ENCODE measurements at regions of chr4 and their contacts with region 1.

Region 1: DNA sequence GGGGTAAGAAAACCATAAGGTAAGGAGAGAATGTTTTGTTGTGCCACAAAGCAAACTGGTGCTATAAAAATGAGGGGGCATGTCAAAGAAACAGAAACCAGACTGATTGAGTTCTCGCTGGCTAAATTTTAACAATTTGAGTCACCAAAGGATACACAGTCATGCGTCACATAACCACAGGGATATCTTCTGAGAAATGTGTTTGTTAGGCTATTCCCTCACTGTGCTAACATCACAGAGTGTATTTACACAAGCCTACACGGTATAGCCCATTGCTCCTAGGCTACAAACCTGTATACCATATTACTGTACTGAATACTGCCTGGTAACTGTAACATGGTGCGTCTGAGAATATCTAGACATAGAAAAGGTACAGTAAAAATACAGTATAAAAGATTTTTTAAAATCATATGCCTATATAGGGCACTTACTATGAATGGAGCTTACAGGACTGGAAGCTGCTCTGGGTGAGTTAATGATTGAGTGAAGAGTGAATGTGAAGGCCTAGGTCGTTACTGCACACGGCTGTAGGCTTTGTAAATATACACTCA is 50.1 kb downstream of the FBXW7 start:
- DNase-seq: peak; percentile 60
- H3K4me3 Mint-ChIP-seq: peak overlapping the region; percentile 40
- H3K27ac Mint-ChIP-seq: peak overlapping the region; percentile 77
- H3K4me1 Mint-ChIP-seq: peaks cover 48% of the 10 kb centered on the region
- H3K27me3 Mint-ChIP-seq: no peaks in the 10 kb centered on the region

Region 2: GRCh38 chr4:151940926-151941617 is 544.7 kb before region 1 on chr4:
- intact Hi-C with region 1: no loop called
- DNase-seq: no peak
- H3K4me3 Mint-ChIP-seq: no peak overlapping the region
- H3K27ac Mint-ChIP-seq: peak overlapping the region; percentile 54
- H3K4me1 Mint-ChIP-seq: peaks cover 10% of the 10 kb centered on the region
- H3K27me3 Mint-ChIP-seq: peaks cover 3% of the 10 kb centered on the region

Region 3: GRCh38 chr4:152255437-152256011 is 230.3 kb before region 1 on chr4:
- intact Hi-C with region 1: loop called (anchors 1 kb)
- DNase-seq: peak; percentile 70
- H3K4me3 Mint-ChIP-seq: no peak overlapping the region
- H3K27ac Mint-ChIP-seq: no peak overlapping the region
- H3K4me1 Mint-ChIP-seq: no peaks in the 10 kb centered on the region
- H3K27me3 Mint-ChIP-seq: no peaks in the 10 kb centered on the region

Region 4: GRCh38 chr4:152460488-152460887 is 25.3 kb before region 1 on chr4:
- intact Hi-C with region 1: loop called (anchors 1 kb)
- DNase-seq: no peak
- H3K4me3 Mint-ChIP-seq: no peak overlapping the region
- H3K27ac Mint-ChIP-seq: peak overlapping the region; percentile 59
- H3K4me1 Mint-ChIP-seq: peaks cover 79% of the 10 kb centered on the region
- H3K27me3 Mint-ChIP-seq: no peaks in the 10 kb centered on the region

Region 5: GRCh38 chr4:152556283-152556682 is 70.5 kb after region 1 on chr4:
- intact Hi-C with region 1: loop called (anchors 1 kb)
- DNase-seq: no peak
- H3K4me3 Mint-ChIP-seq: peak overlapping the region; percentile 41
- H3K27ac Mint-ChIP-seq: peak overlapping the region; percentile 77
- H3K4me1 Mint-ChIP-seq: peaks cover 43% of the 10 kb centered on the region
- H3K27me3 Mint-ChIP-seq: no peaks in the 10 kb centered on the region

Region 6: DNA sequence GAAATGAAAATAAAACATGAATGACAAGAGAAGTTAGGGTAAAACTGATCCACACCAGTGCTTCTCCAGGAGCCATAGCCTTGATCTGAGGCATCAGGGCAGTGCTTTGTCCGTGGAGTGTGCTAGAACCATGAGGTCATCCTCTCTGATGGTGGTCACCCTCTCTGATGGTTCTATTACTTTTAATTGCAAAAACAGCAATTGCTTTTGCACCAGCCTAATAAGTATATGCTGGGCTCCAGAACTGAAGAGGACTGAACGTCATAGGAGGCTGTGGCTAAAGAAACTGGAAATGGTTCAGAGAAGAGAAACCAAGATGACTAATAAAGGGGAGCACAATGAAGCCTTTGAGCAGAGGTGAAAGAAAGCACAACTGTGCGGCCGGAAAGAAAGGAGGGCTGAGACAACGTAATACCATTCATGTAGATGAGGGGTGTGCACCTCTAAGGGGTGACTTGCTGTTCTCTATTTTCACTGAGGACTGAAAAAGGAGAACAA is 211.0 kb after region 1 on chr4:
- intact Hi-C with region 1: loop called (anchors 1 kb)
- DNase-seq: peak; percentile 64
- H3K4me3 Mint-ChIP-seq: no peak overlapping the region
- H3K27ac Mint-ChIP-seq: no peak overlapping the region
- H3K4me1 Mint-ChIP-seq: peaks cover 23% of the 10 kb centered on the region
- H3K27me3 Mint-ChIP-seq: peaks cover 13% of the 10 kb centered on the region

Region 7: GRCh38 chr4:153521999-153522801 is 1036.4 kb after region 1 on chr4:
- intact Hi-C with region 1: loop called (anchors 10 kb)
- DNase-seq: peak; percentile 54
- H3K4me3 Mint-ChIP-seq: peak overlapping the region; percentile 60
- H3K27ac Mint-ChIP-seq: peak overlapping the region; percentile 91
- H3K4me1 Mint-ChIP-seq: peaks cover 89% of the 10 kb centered on the region
- H3K27me3 Mint-ChIP-seq: no peaks in the 10 kb centered on the region